Vagina (tissue), 2 donors: ENCODE measurements at regions of chr11 and their contacts with region 1.

Region 1: DNA sequence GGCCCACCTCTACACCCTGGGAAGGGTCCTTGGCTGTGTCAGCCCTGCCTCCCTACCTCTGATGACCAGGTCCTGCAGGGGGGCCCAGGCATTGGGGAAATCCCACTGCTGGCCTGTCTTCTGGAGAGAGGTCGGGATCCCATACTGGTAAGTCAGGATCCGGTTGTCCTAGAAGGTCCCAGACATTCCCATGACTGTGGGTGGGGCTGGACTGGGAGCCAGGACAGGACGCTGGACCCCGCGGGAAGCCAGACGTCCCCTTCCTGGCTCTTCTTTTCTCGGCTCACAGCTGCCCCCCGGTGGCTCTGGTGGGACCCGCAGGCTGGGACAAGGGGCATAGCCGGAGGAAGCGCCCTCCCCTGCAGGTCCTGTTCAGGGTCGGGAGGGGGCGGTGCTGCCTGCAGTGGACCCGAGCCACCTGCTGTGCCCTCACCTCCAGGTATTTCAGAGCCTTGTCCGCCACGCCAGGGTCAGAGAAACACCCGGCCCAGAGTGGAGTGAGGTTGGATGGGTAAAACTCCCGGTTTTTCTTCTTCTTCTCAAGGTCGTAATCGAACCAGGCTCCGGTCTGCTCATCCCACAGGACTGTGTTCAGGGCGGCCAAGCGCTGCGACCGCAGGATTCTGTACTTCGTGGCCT is 20.0 kb downstream of the TREH start:
- DNase-seq: no peak
- H3K4me3 ChIP-seq: no peak overlapping the region
- H3K27ac ChIP-seq: peak overlapping the region; percentile 80
- H3K4me1 ChIP-seq: peaks cover 14% of the 10 kb centered on the region
- H3K27me3 ChIP-seq: no peaks in the 10 kb centered on the region
- CTCF ChIP-seq: peak; percentile 80 to 96 (median 88)
- POLR2A ChIP-seq: no peak

Region 2: GRCh38 chr11:118596224-118597146 is 62.9 kb before region 1 on chr11:
- intact Hi-C with region 1: loop called (anchors 5 kb)
- DNase-seq: no peak
- H3K4me3 ChIP-seq: no peak overlapping the region
- H3K27ac ChIP-seq: peak overlapping the region; percentile 53
- H3K4me1 ChIP-seq: peaks cover 11% of the 10 kb centered on the region
- H3K27me3 ChIP-seq: no peaks in the 10 kb centered on the region
- CTCF ChIP-seq: no peak
- POLR2A ChIP-seq: no peak